ENCODE measurements at regions of chr11 and their contacts with region 1.

Region 1: GRCh38 chr11:118015385-118015841 is 29.2 kb downstream of the IL10RA start:
- DNase-seq: no peak
- H3K4me3 ChIP-seq: no peak overlapping the region
- H3K27ac ChIP-seq: no peak overlapping the region
- H3K4me1 ChIP-seq: peaks cover 12% of the 10 kb centered on the region
- H3K27me3 ChIP-seq: no peaks in the 10 kb centered on the region
- CTCF ChIP-seq: no peak

Region 2: DNA sequence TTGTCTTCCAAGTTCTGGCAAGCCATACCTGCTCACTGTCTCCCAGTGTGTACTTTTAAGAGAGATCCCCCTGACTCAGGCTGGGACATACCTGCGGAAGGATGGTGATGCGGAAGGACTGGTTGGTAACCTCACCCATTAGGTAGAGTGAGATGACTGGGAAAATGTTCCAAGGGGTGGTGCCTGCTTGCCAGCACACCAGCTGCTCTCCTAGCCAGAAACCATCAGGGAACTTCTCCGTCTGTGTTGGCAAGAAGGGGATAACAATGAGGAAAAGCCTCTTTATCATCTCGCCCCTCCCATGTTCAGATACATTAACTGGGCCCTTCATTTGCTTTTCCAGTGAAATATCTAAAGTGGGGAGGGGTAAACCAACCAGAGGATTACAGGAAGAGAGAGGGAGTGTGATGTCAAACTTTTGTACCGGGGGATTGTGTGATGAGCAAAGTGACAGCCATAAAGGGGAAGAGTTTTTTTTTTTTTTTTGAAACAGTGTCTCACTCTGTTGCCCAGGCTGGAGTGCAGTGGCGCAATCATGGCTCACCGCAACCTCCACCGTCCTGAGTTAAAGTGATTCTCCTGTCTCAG is 724.5 kb before region 1 on chr11 and contains the start of gene BACE1-AS:
- CTCF ChIA-PET with region 1: no interaction called
- dilution Hi-C with region 1: no loop called
- in situ Hi-C with region 1: no loop called
- intact Hi-C with region 1: no loop called
- DNase-seq: no peak
- H3K4me3 ChIP-seq: no peak within 1 kb of the TSS
- H3K27ac ChIP-seq: no peak within 1 kb of the TSS
- H3K4me1 ChIP-seq: no peaks in the 10 kb centered on the region
- H3K27me3 ChIP-seq: no peaks in the 10 kb centered on the region
- CTCF ChIP-seq: no peak
- total RNA-seq, gene BACE1-AS: 2.8 to 5.9 TPM

Region 3: GRCh38 chr11:118027691-118028090 is 12.3 kb after region 1 on chr11:
- CTCF ChIA-PET with region 1: no interaction called
- dilution Hi-C with region 1: no loop called
- in situ Hi-C with region 1: no loop called
- intact Hi-C with region 1: loop called (anchors 1 kb)
- DNase-seq: no peak
- H3K4me3 ChIP-seq: no peak overlapping the region
- H3K27ac ChIP-seq: no peak overlapping the region
- H3K4me1 ChIP-seq: no peaks in the 10 kb centered on the region
- H3K27me3 ChIP-seq: no peaks in the 10 kb centered on the region
- CTCF ChIP-seq: no peak

Region 4: DNA sequence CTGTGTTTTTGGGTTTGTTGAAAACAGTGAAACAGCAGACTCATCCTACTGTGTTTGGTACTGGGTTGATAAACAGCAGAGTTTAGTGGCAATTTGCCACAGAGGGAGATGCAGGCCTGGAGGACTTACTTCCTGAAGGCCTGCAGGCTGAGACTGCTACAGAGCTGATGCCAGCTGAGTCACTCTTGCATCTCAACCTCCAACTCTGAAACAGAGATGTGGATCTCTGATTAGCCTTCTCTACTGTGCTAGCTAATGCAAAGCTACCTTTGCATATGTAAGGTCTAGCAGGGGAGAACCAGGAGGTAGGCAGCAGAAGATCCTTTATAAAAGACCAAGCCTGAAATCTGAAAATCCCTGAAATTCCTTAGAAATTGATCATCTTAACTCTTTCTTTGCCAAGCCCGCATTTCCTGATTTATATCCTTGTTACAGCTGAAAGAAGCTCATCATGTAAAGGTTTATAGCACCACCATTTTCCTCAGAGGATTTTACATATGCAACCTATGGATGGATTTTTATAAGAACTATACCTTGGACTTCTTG is 400.4 kb after region 1 on chr11:
- CTCF ChIA-PET with region 1: no interaction called
- dilution Hi-C with region 1: no loop called
- in situ Hi-C with region 1: no loop called
- intact Hi-C with region 1: no loop called
- DNase-seq: peak; percentile 85
- H3K4me3 ChIP-seq: no peak overlapping the region
- H3K27ac ChIP-seq: no peak overlapping the region
- H3K4me1 ChIP-seq: peaks cover 17% of the 10 kb centered on the region
- H3K27me3 ChIP-seq: no peaks in the 10 kb centered on the region
- CTCF ChIP-seq: no peak

Measured in mammary epithelial cell (primary cell).